ENCODE measurements at regions of chr1 and their contacts with region 1.

Region 1: DNA sequence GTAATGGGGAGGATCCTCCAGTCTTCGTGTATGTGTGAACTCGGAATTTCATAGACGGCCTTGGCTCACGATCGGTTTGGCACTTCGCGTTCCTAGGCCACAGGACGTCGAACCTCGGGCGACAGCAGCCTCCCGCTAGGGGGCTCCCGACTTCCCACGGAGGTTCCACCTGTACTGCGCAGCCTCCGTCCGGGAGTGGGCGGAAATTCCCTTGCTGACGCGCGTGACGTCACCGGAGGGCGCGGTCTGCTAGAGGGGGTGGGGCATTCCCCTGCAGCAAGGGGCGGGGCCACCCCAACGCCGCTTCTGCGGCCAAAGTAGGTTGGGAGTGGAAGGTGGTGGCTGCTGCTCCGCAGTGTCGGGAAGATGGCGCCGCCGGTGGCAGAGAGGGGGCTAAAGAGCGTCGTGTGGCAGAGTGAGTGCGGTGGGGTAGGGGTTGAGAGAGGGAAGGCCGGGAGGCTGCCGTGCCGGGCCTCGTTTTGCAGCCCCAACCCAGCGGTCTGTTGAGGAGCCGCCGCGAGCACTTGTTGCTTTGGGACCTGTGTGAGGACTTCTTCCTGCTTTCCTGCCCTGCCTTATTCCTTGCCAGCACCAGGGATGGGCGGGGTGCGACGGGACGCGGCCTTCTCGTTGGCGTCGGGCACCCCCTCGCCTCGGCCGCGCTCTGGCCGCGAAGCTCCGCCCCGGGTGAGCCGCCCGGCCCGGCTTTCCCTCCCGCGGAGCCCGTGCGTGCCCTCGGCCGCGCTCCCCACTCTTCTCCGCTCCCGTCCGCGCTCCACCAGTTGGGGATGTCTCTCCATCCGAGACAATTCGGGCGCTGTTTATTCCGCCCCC is at the start of gene STXBP3:
- DNase-seq: peak; percentile 92 to 99
- H3K4me3 ChIP-seq: peak within 1 kb of the TSS; percentile 71 to 89
- H3K27ac ChIP-seq: peak within 1 kb of the TSS; percentile 96 to 97
- H3K4me1 ChIP-seq: peaks cover 0 to 8% of the 10 kb centered on the region in 2 donors
- H3K27me3 ChIP-seq: no peaks in the 10 kb centered on the region
- CTCF ChIP-seq: peak; percentile 84 to 97 (median 94)
- total RNA-seq, gene STXBP3: 13.7 TPM

Region 2: DNA sequence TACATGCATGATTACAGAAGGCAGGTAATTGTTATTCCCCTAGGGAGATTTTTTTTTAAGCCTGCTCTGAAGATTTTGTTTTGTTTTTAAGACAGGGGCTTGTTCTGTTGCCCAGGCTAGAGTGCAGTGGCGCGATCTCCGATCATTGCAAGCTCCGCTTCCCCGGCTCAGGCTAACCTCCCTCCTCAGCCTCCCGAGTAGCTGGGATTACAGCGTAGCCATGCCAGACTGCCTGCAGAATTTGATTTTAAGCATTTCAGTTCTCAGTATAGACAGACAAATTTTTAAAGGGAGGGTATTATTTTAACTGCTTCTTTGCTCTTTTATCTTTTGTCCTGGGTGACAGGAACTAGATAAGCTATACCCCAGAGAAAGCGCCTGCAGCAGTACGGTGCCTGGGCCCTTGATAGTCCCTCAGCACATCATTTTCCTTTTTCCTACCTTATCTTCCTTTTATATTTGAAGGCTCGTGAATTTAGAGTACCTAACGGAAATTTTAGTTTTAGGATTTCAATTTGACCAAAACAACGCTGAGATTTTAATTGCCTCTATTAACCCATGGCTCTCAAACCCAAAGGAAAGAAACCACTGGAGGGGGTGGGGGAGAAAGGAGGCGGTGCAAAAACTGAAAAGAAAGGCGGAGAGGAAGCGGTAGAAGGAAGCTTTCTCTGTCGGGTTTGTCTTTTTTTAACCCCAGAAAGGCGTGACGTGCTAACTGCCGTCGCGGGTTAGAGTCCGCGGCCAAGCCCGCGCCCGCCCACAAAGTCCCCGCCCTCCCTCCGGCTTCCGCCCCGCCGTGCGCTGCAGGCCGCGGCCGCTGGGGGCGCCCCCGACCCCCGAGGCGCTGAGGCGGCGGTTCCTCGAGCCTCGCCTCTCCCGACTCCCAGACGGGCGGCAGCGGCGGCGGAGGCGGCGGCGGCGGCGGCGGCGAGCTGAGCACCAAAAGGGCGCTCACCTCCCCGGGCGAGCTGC is 187.1 kb before region 1 on chr1 and contains the start of gene EEIG2:
- intact Hi-C with region 1: loop called (anchors 2 kb)
- DNase-seq: peak; percentile 24 to 93
- H3K4me3 ChIP-seq: peak within 1 kb of the TSS; percentile 72 to 87
- H3K27ac ChIP-seq: peak within 1 kb of the TSS; percentile 72 to 75
- H3K4me1 ChIP-seq: peaks cover 9 to 19% of the 10 kb centered on the region in 2 donors
- H3K27me3 ChIP-seq: no peaks in the 10 kb centered on the region
- CTCF ChIP-seq: peak; percentile 47 to 83 (median 67)
- total RNA-seq, gene EEIG2: 9.6 TPM

Region 3: DNA sequence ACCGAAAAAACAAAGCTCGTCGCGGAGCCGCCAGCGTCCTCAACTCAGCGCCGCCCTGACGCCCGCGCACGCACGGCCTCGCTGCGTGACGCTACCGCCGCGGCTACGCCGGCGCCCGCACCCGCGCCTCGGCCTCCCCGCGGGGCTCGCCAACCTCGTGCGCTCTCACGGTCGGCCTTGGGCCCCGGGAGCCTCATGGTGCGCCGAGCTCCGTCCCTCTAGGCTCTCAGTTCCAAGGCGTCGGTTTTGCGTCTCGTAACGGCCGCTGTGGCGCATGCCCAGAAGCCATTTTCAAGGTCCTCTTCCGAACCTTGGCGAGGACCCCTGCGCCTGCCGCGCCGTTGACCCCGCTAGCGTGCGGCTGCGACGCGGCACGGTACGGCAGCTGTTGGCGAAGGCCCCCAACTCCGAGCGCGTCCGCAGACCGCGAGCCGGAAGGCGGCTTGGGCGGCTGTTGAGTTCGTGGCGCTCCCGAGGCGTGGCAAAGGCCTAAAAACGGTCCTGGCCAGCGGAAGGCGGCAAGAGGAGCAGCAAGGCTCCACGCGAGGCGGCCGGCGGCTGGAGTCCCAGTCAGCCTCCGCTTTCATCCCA is 85.5 kb before region 1 on chr1 and contains the start of gene HENMT1:
- intact Hi-C with region 1: loop called (anchors 10 kb)
- DNase-seq: peak in 1 of 2 donors; percentile 78
- H3K4me3 ChIP-seq: peak within 1 kb of the TSS; percentile 74 to 87
- H3K27ac ChIP-seq: peak within 1 kb of the TSS; percentile 92 to 93
- H3K4me1 ChIP-seq: peaks cover 0 to 3% of the 10 kb centered on the region in 2 donors
- H3K27me3 ChIP-seq: no peaks in the 10 kb centered on the region
- CTCF ChIP-seq: no peak
- total RNA-seq, gene HENMT1: not detected

Region 4: DNA sequence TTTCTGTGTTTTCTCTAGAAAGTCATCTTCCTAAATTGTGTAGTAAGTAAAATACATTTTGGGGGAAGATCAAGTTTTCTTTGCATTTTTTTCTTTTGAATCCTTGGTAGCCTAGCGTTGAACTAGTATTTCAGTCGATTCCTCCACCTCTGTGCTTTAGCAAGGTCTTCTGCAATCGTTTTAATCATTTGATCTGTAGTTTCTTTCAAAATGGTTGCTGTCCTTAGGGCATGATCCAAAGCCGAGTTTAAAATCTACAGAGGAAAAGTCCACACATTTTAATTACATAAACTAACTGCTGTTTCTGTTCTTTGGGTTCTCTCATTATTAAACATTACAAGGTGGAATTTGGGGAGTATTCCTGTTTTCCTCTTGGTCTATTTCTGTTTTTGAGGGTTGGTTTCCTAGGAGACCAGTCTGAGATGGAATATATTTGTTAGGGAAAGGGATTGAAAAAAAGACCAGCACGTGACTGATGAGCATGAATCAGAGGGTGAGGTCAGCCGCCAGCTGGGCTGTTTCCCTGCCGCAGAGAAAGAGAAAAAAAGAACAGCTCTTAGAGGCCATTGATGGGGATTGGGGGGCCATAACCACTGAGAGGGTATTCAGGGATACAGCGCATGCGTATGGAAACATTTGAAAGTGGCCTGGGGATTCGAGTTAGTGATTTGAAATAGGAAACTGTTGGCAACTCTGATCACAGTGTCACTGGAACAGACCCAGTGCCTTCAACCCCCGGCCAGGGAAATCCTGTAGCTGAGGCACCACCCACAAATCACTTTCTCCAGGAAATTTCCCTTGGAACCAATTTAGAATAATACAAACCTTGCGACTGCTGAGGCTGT is 69.7 kb after region 1 on chr1:
- intact Hi-C with region 1: loop called (anchors 2 kb)
- DNase-seq: peak; percentile 31 to 90
- H3K4me3 ChIP-seq: peak overlapping the region; percentile 48 to 52
- H3K27ac ChIP-seq: peak overlapping the region; percentile 83 to 86
- H3K4me1 ChIP-seq: peaks cover 4 to 17% of the 10 kb centered on the region in 2 donors
- H3K27me3 ChIP-seq: no peaks in the 10 kb centered on the region
- CTCF ChIP-seq: no peak

Region 5: DNA sequence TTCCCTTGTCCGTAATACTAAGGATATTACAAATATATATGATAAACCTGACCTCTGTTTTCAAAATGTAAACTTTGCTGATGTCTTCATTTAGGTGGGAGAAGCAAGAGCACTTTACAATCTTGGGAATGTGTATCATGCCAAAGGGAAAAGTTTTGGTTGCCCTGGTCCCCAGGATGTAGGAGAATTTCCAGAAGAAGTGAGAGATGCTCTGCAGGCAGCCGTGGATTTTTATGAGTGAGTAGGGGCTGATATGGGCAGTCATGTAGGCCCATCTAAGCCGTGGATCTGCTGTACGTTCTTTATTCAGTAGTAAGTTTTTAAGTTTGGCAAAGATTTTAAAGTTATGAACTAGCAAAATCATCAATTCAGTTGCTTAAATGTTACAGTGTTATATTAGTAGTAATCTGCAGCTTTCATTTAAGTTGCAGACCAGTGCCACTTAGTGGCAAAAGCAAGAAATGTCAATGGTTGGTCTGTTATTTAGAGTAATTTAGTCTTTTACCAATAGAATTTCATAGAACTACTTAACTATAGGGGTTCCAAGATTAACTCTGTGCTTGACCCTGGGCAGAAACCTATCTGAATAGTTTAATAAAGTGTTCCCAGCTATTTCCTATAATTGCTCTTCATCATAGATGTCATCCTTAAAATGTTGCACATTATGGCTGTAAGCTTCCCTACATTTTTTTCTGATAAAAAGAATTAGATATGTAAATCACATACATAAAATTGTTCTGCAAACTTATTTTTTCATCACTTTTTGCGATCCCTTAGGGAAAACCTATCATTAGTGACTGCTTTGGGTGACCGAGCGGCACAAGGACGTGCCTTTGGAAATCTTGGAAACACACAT is 151.5 kb after region 1 on chr1:
- intact Hi-C with region 1: loop called (anchors 5 kb)
- DNase-seq: no peak
- H3K4me3 ChIP-seq: no peak overlapping the region
- H3K27ac ChIP-seq: no peak overlapping the region
- H3K4me1 ChIP-seq: no peaks in the 10 kb centered on the region
- H3K27me3 ChIP-seq: no peaks in the 10 kb centered on the region
- CTCF ChIP-seq: peak; percentile 61 to 71 (median 71)